ENCODE measurements at regions of chr12 and their contacts with region 1.

Region 1: GRCh38 chr12:14514154-14514842 is 53.4 kb downstream of the PLBD1 start:
- DNase-seq: peak; percentile 82 to 92
- H3K4me3 ChIP-seq: no peak overlapping the region
- H3K4me3 Mint-ChIP-seq: peak overlapping the region; percentile 47
- H3K27ac Mint-ChIP-seq: peak overlapping the region; percentile 68
- H3K4me1 ChIP-seq: peaks cover 14% of the 10 kb centered on the region
- H3K4me1 Mint-ChIP-seq: peaks cover 16% of the 10 kb centered on the region
- H3K27me3 ChIP-seq: no peaks in the 10 kb centered on the region
- H3K27me3 Mint-ChIP-seq: no peaks in the 10 kb centered on the region
- CTCF ChIP-seq: peak; percentile 71 to 87

Region 2: GRCh38 chr12:14239350-14239934 is 274.9 kb before region 1 on chr12:
- CTCF ChIA-PET with region 1: interaction called, 6 read pairs
- POLR2A ChIA-PET with region 1: no interaction called
- intact Hi-C with region 1: loop called (anchors 5 kb)
- DNase-seq: peak; percentile 64 to 85
- H3K4me3 ChIP-seq: no peak overlapping the region
- H3K4me3 Mint-ChIP-seq: peak overlapping the region; percentile 32
- H3K27ac Mint-ChIP-seq: peak overlapping the region; percentile 43
- H3K4me1 ChIP-seq: peaks cover 18% of the 10 kb centered on the region
- H3K4me1 Mint-ChIP-seq: peaks cover 9% of the 10 kb centered on the region
- H3K27me3 ChIP-seq: no peaks in the 10 kb centered on the region
- H3K27me3 Mint-ChIP-seq: no peaks in the 10 kb centered on the region
- CTCF ChIP-seq: peak in 1 of 2 experiments; percentile 16

Region 3: GRCh38 chr12:14567351-14568162 is 53.3 kb after region 1 on chr12 and contains the start of gene PLBD1:
- CTCF ChIA-PET with region 1: no interaction called
- POLR2A ChIA-PET with region 1: interaction called, 4 read pairs
- intact Hi-C with region 1: loop called (anchors 1 kb)
- DNase-seq: peak; percentile 73 to 78
- H3K4me3 ChIP-seq: peak within 1 kb of the TSS; percentile 50
- H3K4me3 Mint-ChIP-seq: peak within 1 kb of the TSS; percentile 75
- H3K27ac Mint-ChIP-seq: peak within 1 kb of the TSS; percentile 64
- H3K4me1 ChIP-seq: peaks cover 18% of the 10 kb centered on the region
- H3K4me1 Mint-ChIP-seq: peaks cover 5% of the 10 kb centered on the region
- H3K27me3 ChIP-seq: no peaks in the 10 kb centered on the region
- H3K27me3 Mint-ChIP-seq: no peaks in the 10 kb centered on the region
- CTCF ChIP-seq: no peak
- total RNA-seq, gene PLBD1: 21.1 and 21.4 TPM in 2 replicates

Region 4: GRCh38 chr12:14618983-14619382 is 104.7 kb after region 1 on chr12:
- CTCF ChIA-PET with region 1: interaction called, 11 read pairs
- POLR2A ChIA-PET with region 1: no interaction called
- intact Hi-C with region 1: loop called (anchors 1 kb)
- DNase-seq: peak in 1 of 2 experiments; percentile 41
- H3K4me3 ChIP-seq: no peak overlapping the region
- H3K4me3 Mint-ChIP-seq: no peak overlapping the region
- H3K27ac Mint-ChIP-seq: no peak overlapping the region
- H3K4me1 ChIP-seq: peaks cover 23% of the 10 kb centered on the region
- H3K4me1 Mint-ChIP-seq: peaks cover 10% of the 10 kb centered on the region
- H3K27me3 ChIP-seq: no peaks in the 10 kb centered on the region
- H3K27me3 Mint-ChIP-seq: no peaks in the 10 kb centered on the region
- CTCF ChIP-seq: peak in 1 of 2 experiments; percentile 27

Region 5: GRCh38 chr12:14664510-14664909 is 150.2 kb after region 1 on chr12:
- CTCF ChIA-PET with region 1: interaction called, 4 read pairs
- POLR2A ChIA-PET with region 1: no interaction called
- intact Hi-C with region 1: loop called (anchors 1 kb)
- DNase-seq: peak in 1 of 2 experiments; percentile 51
- H3K4me3 ChIP-seq: no peak overlapping the region
- H3K4me3 Mint-ChIP-seq: no peak overlapping the region
- H3K27ac Mint-ChIP-seq: no peak overlapping the region
- H3K4me1 ChIP-seq: no peaks in the 10 kb centered on the region
- H3K4me1 Mint-ChIP-seq: peaks cover 10% of the 10 kb centered on the region
- H3K27me3 ChIP-seq: no peaks in the 10 kb centered on the region
- H3K27me3 Mint-ChIP-seq: no peaks in the 10 kb centered on the region
- CTCF ChIP-seq: peak; percentile 64 to 89

Region 6: DNA sequence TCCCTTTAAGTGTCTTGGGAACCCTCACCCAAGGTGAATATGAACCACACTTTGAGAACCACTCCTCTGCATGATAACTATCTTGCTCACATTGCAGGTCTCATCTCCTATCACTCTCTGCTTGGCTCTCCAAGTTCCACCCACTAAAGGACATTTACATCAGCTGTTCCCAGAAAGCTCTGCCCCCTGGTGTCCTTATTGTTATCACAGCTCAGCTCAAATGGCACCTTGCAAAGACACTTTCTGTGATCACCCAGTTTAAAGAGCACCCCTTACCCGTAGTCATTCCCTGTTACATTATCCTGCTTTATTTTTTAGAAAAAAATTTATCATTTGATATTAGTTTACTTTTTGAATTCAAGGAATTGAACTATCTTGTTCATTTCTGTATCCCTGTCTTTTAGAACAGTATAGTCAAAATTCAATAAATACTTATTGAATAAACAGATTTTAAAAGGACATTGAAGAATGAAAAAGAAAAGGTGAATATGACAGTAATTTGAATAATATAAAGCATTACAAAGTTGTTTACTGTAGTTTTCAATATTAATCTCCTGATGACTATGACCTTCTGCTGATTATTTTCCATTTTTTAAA is 202.6 kb after region 1 on chr12:
- CTCF ChIA-PET with region 1: no interaction called
- POLR2A ChIA-PET with region 1: no interaction called
- intact Hi-C with region 1: loop called (anchors 5 kb)
- DNase-seq: peak; percentile 59 to 67
- H3K4me3 ChIP-seq: no peak overlapping the region
- H3K4me3 Mint-ChIP-seq: no peak overlapping the region
- H3K27ac Mint-ChIP-seq: no peak overlapping the region
- H3K4me1 ChIP-seq: peaks cover 5% of the 10 kb centered on the region; the same call in 1 of the 2 replicates
- H3K4me1 Mint-ChIP-seq: peaks cover 16% of the 10 kb centered on the region
- H3K27me3 ChIP-seq: no peaks in the 10 kb centered on the region
- H3K27me3 Mint-ChIP-seq: no peaks in the 10 kb centered on the region
- CTCF ChIP-seq: peak; percentile 30 to 64

Region 7: GRCh38 chr12:14774906-14775762 is 260.8 kb after region 1 on chr12:
- CTCF ChIA-PET with region 1: interaction called, 3 read pairs
- POLR2A ChIA-PET with region 1: no interaction called
- intact Hi-C with region 1: loop called (anchors 5 kb)
- DNase-seq: peak; percentile 59 to 61
- H3K4me3 ChIP-seq: peak overlapping the region; percentile 67
- H3K4me3 Mint-ChIP-seq: peak overlapping the region; percentile 93
- H3K27ac Mint-ChIP-seq: peak overlapping the region; percentile 97
- H3K4me1 ChIP-seq: peaks cover 30% of the 10 kb centered on the region
- H3K4me1 Mint-ChIP-seq: peaks cover 46% of the 10 kb centered on the region
- H3K27me3 ChIP-seq: no peaks in the 10 kb centered on the region
- H3K27me3 Mint-ChIP-seq: no peaks in the 10 kb centered on the region
- CTCF ChIP-seq: no peak

Measured in Caco-2 (cell line).